AG04450 (cell line): ENCODE measurements at regions of chr2 and their contacts with region 1.

Region 1: GRCh38 chr2:33441235-33441810 is 35.1 kb upstream of the RASGRP3 start:
- DNase-seq: no peak
- H3K4me3 ChIP-seq: no peak overlapping the region
- H3K27ac ChIP-seq: no peak overlapping the region
- H3K27me3 ChIP-seq: no peaks in the 10 kb centered on the region
- CTCF ChIP-seq: peak; percentile 82

Region 2: GRCh38 chr2:33166287-33166881 is 274.9 kb before region 1 on chr2:
- CTCF ChIA-PET with region 1: no interaction called
- POLR2A ChIA-PET with region 1: no interaction called
- DNase-seq: no peak
- H3K4me3 ChIP-seq: no peak overlapping the region
- H3K27ac ChIP-seq: peak overlapping the region; percentile 66
- H3K27me3 ChIP-seq: no peaks in the 10 kb centered on the region
- CTCF ChIP-seq: no peak

Region 3: GRCh38 chr2:33412920-33413319 is 28.4 kb before region 1 on chr2:
- CTCF ChIA-PET with region 1: interaction called, 18 read pairs
- POLR2A ChIA-PET with region 1: interaction called, 4 read pairs
- DNase-seq: no peak
- H3K4me3 ChIP-seq: no peak overlapping the region
- H3K27ac ChIP-seq: no peak overlapping the region
- H3K27me3 ChIP-seq: no peaks in the 10 kb centered on the region
- CTCF ChIP-seq: peak; percentile 65

Region 4: GRCh38 chr2:33419581-33420200 is 21.6 kb before region 1 on chr2:
- CTCF ChIA-PET with region 1: interaction called, 12 read pairs
- POLR2A ChIA-PET with region 1: no interaction called
- DNase-seq: no peak
- H3K4me3 ChIP-seq: no peak overlapping the region
- H3K27ac ChIP-seq: no peak overlapping the region
- H3K27me3 ChIP-seq: no peaks in the 10 kb centered on the region
- CTCF ChIP-seq: no peak

Region 5: DNA sequence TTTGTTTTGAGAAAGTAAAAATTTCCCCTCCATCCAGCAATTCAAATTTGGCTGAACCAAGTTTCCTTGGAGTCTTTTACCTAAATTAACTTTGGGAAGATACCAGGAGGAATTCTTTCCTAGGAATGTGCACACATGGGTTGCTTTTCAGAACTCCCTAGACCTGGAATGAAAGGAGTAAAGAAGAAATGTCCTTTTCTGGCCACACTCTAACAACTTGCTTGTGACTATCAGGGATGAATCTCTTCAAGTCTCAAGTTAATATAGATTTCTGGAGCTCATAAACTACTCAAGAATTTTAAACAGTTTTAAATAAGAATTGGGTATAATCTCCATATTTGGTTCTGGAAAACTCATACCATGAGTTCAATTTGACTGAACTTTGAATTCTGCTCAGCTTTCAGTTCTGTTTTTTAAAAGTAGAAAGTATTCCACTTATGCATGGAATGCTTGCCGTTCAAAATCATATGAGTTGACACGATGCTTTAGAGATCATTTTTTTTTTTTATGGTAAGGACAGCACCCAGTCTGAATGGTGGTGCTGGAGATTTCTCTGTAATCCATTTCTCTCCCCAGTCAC is 42.8 kb after region 1 on chr2:
- CTCF ChIA-PET with region 1: no interaction called
- POLR2A ChIA-PET with region 1: no interaction called
- DNase-seq: no peak
- H3K4me3 ChIP-seq: no peak overlapping the region
- H3K27ac ChIP-seq: no peak overlapping the region
- H3K27me3 ChIP-seq: no peaks in the 10 kb centered on the region
- CTCF ChIP-seq: no peak

Region 6: DNA sequence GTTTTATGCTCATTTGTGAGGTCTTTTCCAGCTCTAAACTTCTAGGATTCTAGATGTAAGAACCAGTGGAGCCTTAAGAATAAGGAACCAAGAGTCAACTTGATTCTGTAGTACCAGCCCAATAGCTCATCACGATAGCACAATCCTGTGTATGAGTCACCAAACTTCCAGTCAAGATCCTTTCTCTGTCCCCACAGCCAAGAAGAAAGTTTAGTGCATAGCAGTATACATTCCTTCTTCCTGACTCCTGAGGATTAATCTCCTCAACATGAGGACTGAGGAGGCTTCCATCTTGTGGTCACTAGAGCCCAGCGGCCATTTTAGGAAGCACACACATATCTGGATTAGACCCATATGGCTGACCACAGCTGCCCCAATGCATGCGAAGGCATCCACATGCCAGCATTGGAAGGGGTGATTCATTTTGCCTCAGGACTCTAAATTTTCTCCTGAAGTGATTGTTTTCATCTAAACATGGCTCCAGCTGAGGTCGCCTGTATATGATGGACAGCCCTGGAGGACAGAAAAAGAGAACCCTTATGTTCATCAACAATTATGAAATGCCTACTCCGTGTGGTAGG is 88.5 kb after region 1 on chr2:
- CTCF ChIA-PET with region 1: no interaction called
- POLR2A ChIA-PET with region 1: no interaction called
- DNase-seq: peak; percentile 90
- H3K4me3 ChIP-seq: no peak overlapping the region
- H3K27ac ChIP-seq: peak overlapping the region; percentile 94
- H3K27me3 ChIP-seq: no peaks in the 10 kb centered on the region
- CTCF ChIP-seq: 0 out of 2 replicates have a peak, but pooled peaks have one; percentile 31